AG04450 (cell line): ENCODE measurements at regions of chr6 and their contacts with region 1.

Region 1: GRCh38 chr6:36423101-36423824 is 19.4 kb downstream of the PXT1 start:
- DNase-seq: peak; percentile 91
- H3K4me3 ChIP-seq: peak overlapping the region; percentile 76
- H3K27ac ChIP-seq: peak overlapping the region; percentile 31
- H3K27me3 ChIP-seq: no peaks in the 10 kb centered on the region
- CTCF ChIP-seq: peak; percentile 72

Region 2: GRCh38 chr6:35503534-35503933 is 919.7 kb before region 1 on chr6:
- CTCF ChIA-PET with region 1: no interaction called
- POLR2A ChIA-PET with region 1: no interaction called
- DNase-seq: no peak
- H3K4me3 ChIP-seq: no peak overlapping the region
- H3K27ac ChIP-seq: no peak overlapping the region
- H3K27me3 ChIP-seq: peaks cover 26% of the 10 kb centered on the region
- CTCF ChIP-seq: no peak

Region 3: GRCh38 chr6:36150283-36150682 is 273.0 kb before region 1 on chr6:
- CTCF ChIA-PET with region 1: no interaction called
- POLR2A ChIA-PET with region 1: no interaction called
- DNase-seq: no peak
- H3K4me3 ChIP-seq: no peak overlapping the region
- H3K27ac ChIP-seq: no peak overlapping the region
- H3K27me3 ChIP-seq: peaks cover 13% of the 10 kb centered on the region
- CTCF ChIP-seq: no peak

Region 4: DNA sequence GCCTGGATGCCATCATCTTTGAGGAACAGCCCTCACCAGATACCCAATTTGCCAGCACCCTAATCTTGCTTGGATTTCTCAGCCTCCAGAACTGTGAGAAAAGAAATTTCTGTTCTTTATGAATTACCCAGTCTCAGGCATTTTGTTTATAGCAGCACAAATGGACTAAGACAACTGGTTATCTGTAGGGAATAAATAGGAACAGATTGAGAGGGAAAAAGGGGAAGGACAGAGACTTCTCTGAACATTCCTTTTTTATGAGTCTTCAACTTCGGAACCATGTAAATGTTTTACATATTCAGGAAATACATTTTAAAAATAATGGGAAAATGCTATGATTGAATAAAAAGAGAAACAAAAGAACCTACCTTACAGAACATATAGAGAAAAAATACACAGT is 40.4 kb after region 1 on chr6:
- CTCF ChIA-PET with region 1: no interaction called
- POLR2A ChIA-PET with region 1: no interaction called
- DNase-seq: no peak
- H3K4me3 ChIP-seq: no peak overlapping the region
- H3K27ac ChIP-seq: no peak overlapping the region
- H3K27me3 ChIP-seq: no peaks in the 10 kb centered on the region
- CTCF ChIP-seq: no peak

Region 5: GRCh38 chr6:36533321-36533720 is 110.1 kb after region 1 on chr6:
- CTCF ChIA-PET with region 1: interaction called, 11 read pairs
- POLR2A ChIA-PET with region 1: no interaction called
- DNase-seq: no peak
- H3K4me3 ChIP-seq: no peak overlapping the region
- H3K27ac ChIP-seq: no peak overlapping the region
- H3K27me3 ChIP-seq: no peaks in the 10 kb centered on the region
- CTCF ChIP-seq: no peak